ENCODE measurements at regions of chr3 and their contacts with region 1.

Region 1: DNA sequence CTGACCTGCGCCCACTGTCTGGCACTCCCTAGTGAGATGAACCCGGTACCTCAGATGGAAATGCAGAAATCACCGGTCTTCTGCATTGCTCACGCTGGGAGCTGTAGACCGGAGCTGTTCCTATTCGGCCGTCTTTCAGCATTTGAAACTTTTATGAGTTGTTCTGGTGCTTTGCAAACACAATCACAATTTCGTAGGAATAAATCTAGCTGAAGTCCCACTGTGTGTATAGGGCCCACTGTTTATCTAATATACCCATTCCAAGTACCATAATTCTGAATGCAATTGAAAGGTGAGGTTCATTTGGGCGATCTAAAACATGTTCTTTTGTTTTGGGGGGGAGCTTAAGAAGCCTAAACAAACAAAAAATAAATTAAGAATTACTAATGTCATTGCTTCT is 572.1 kb downstream of the FGF12 start:
- DNase-seq: no peak
- H3K4me3 ChIP-seq: peak overlapping the region; percentile 25 to 61 (median 34)
- H3K27ac ChIP-seq: no peak overlapping the region; the same call in 1 of the 2 replicates
- H3K4me1 ChIP-seq: no peaks in the 10 kb centered on the region
- H3K27me3 ChIP-seq: no peaks in the 10 kb centered on the region
- CTCF ChIP-seq: no peak
- EP300 ChIP-seq: no peak
- POLR2A ChIP-seq: no peak
- RAD21 ChIP-seq: no peak

Region 2: DNA sequence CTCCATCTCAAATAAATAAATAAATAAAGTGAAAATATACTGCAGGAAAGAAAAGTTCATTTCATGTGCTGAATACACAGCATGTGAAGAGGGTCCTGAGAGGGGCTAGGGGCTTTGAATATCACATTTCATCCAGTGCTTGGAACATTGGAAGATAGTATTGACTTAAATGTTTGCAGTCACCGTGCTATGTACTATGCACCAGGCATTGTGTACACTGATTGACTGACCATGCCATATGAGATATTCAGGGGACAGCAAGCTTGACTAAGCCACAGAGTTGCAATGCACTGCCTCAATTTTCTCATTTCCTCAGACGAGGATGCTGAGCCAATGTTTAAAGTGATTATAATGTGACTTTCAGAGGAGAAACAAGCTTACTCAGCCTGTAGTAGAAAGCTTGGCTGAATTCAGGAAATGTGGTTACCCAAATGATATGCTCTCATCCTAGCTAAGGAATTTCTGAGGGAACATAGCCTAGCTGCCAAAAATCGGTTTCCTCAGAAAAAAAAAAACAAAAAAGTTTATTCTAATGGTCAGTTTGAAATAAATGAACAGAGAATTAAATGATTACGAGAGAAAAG is 14.2 kb after region 1 on chr3:
- CTCF ChIA-PET with region 1: interaction called, 11 read pairs
- POLR2A ChIA-PET with region 1: interaction called, 3 read pairs
- DNase-seq: no peak
- H3K4me3 ChIP-seq: no peak overlapping the region
- H3K27ac ChIP-seq: no peak overlapping the region
- H3K4me1 ChIP-seq: peaks cover 0 to 4% (median 0%) of the 10 kb centered on the region in 4 experiments; a peak in 1 of 7 replicates
- H3K27me3 ChIP-seq: no peaks in the 10 kb centered on the region
- CTCF ChIP-seq: no peak
- EP300 ChIP-seq: no peak
- POLR2A ChIP-seq: no peak
- RAD21 ChIP-seq: no peak

Region 3: GRCh38 chr3:192181151-192181550 is 26.0 kb after region 1 on chr3:
- CTCF ChIA-PET with region 1: no interaction called
- POLR2A ChIA-PET with region 1: no interaction called
- DNase-seq: no peak
- H3K4me3 ChIP-seq: no peak overlapping the region
- H3K27ac ChIP-seq: no peak overlapping the region
- H3K4me1 ChIP-seq: peaks cover 0 to 3% (median 0%) of the 10 kb centered on the region in 4 experiments; a peak in 1 of 7 replicates
- H3K27me3 ChIP-seq: peaks cover 8 to 36% (median 26%) of the 10 kb centered on the region in 4 experiments; a peak in 6 of 7 replicates
- CTCF ChIP-seq: no peak
- EP300 ChIP-seq: no peak
- POLR2A ChIP-seq: no peak
- RAD21 ChIP-seq: no peak

Region 4: GRCh38 chr3:192433704-192434103 is 278.5 kb after region 1 on chr3:
- CTCF ChIA-PET with region 1: no interaction called
- POLR2A ChIA-PET with region 1: no interaction called
- DNase-seq: no peak
- H3K4me3 ChIP-seq: no peak overlapping the region
- H3K27ac ChIP-seq: no peak overlapping the region
- H3K4me1 ChIP-seq: no peaks in the 10 kb centered on the region
- H3K27me3 ChIP-seq: no peaks in the 10 kb centered on the region
- CTCF ChIP-seq: no peak
- EP300 ChIP-seq: no peak
- POLR2A ChIP-seq: no peak
- RAD21 ChIP-seq: no peak